Mammary epithelial cell (primary cell): ENCODE measurements at regions of chr6 and their contacts with region 1.

Region 1: GRCh38 chr6:136226027-136226673 is 24.0 kb downstream of the MTFR2 start:
- DNase-seq: no peak
- H3K4me3 ChIP-seq: no peak overlapping the region
- H3K27ac ChIP-seq: no peak overlapping the region
- H3K4me1 ChIP-seq: no peaks in the 10 kb centered on the region
- H3K27me3 ChIP-seq: no peaks in the 10 kb centered on the region
- CTCF ChIP-seq: peak; percentile 100

Region 2: GRCh38 chr6:135506270-135506997 is 719.7 kb before region 1 on chr6:
- CTCF ChIA-PET with region 1: no interaction called
- dilution Hi-C with region 1: no loop called
- in situ Hi-C with region 1: no loop called
- intact Hi-C with region 1: loop called (anchors 1 kb)
- DNase-seq: peak; percentile 8
- H3K4me3 ChIP-seq: no peak overlapping the region
- H3K27ac ChIP-seq: no peak overlapping the region
- H3K4me1 ChIP-seq: no peaks in the 10 kb centered on the region
- H3K27me3 ChIP-seq: no peaks in the 10 kb centered on the region
- CTCF ChIP-seq: peak; percentile 30 to 58

Region 3: DNA sequence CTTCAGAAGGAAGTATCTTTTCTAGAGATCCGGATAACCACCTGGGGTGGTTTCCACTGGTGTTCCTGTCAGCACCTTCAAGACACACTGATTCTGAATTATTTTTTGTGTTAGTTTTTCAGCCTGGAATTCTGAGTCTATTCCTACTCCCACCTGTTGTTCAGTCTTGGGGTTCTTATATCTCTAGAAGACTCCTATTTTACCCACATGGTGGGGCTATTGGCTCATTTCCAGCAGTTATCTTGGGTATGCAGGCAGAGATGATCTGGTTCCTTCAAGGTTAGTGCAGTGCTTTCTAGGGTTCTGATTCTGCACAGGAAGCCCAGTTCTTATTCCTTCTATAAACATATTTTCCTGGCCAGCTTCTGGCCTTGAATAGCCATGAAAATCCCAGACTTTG is 550.3 kb before region 1 on chr6:
- CTCF ChIA-PET with region 1: no interaction called
- dilution Hi-C with region 1: no loop called
- in situ Hi-C with region 1: no loop called
- intact Hi-C with region 1: loop called (anchors 1 kb)
- DNase-seq: peak; percentile 3
- H3K4me3 ChIP-seq: no peak overlapping the region
- H3K27ac ChIP-seq: no peak overlapping the region
- H3K4me1 ChIP-seq: no peaks in the 10 kb centered on the region
- H3K27me3 ChIP-seq: peaks cover 2% of the 10 kb centered on the region
- CTCF ChIP-seq: no peak

Region 4: DNA sequence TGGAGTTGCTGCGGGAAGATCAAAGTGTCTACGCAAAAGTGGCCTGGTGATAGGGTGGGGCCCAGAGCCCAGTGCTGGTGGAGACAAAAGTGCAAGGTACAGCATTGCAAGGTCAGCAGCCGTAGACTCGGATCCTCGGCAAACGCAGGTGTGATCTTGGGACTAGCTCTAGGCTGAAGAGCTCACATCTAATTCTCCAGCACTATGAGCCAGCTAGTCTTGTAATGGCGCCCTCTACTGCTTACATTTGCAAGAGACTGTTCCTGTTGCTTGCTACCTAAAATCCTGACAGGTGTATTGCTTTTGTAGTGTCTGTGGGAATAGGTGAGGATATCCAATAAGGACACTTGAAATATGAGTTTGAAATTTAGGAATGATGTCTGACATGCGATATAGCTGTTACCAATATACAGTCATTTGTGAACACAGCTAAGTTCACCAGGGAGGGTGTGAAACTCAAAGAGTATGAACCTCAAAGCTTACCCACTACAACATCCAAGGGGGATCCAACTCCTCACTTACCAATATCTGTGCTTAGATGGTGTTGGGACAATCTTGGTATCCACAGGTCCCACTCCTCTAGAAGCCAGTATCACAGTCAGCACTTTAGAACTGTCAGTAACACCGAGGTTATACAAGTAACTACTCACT is 316.3 kb before region 1 on chr6:
- CTCF ChIA-PET with region 1: no interaction called
- dilution Hi-C with region 1: no loop called
- in situ Hi-C with region 1: no loop called
- intact Hi-C with region 1: loop called (anchors 2 kb)
- DNase-seq: peak; percentile 54
- H3K4me3 ChIP-seq: no peak overlapping the region
- H3K27ac ChIP-seq: no peak overlapping the region
- H3K4me1 ChIP-seq: peaks cover 6% of the 10 kb centered on the region
- H3K27me3 ChIP-seq: no peaks in the 10 kb centered on the region
- CTCF ChIP-seq: peak; percentile 69 to 80

Region 5: DNA sequence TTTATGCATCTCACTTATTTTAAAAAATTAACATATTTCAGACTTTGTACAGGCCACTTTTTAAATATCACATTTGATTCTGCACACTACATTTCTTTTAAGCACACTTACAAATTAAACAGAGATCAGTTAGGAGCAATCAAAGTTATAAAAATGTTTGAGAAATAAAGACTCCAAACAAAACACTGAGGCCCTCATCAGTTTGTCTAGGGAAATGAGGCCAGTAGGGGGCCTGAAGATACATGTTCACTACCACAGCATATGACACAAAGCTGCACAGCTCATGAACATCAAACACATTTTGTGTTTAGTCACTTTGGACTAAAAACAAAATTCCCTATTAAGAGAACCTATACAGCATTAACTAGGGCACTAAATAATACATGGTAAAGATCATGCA is 194.2 kb before region 1 on chr6:
- CTCF ChIA-PET with region 1: no interaction called
- dilution Hi-C with region 1: no loop called
- in situ Hi-C with region 1: no loop called
- intact Hi-C with region 1: loop called (anchors 1 kb)
- DNase-seq: no peak
- H3K4me3 ChIP-seq: no peak overlapping the region
- H3K27ac ChIP-seq: no peak overlapping the region
- H3K4me1 ChIP-seq: no peaks in the 10 kb centered on the region
- H3K27me3 ChIP-seq: no peaks in the 10 kb centered on the region
- CTCF ChIP-seq: peak; percentile 43 to 52

Region 6: GRCh38 chr6:136173519-136174507 is 52.3 kb before region 1 on chr6:
- CTCF ChIA-PET with region 1: no interaction called
- dilution Hi-C with region 1: no loop called
- in situ Hi-C with region 1: no loop called
- intact Hi-C with region 1: no loop called
- DNase-seq: no peak
- H3K4me3 ChIP-seq: no peak overlapping the region
- H3K27ac ChIP-seq: no peak overlapping the region
- H3K4me1 ChIP-seq: no peaks in the 10 kb centered on the region
- H3K27me3 ChIP-seq: peaks cover 6% of the 10 kb centered on the region
- CTCF ChIP-seq: no peak

Region 7: DNA sequence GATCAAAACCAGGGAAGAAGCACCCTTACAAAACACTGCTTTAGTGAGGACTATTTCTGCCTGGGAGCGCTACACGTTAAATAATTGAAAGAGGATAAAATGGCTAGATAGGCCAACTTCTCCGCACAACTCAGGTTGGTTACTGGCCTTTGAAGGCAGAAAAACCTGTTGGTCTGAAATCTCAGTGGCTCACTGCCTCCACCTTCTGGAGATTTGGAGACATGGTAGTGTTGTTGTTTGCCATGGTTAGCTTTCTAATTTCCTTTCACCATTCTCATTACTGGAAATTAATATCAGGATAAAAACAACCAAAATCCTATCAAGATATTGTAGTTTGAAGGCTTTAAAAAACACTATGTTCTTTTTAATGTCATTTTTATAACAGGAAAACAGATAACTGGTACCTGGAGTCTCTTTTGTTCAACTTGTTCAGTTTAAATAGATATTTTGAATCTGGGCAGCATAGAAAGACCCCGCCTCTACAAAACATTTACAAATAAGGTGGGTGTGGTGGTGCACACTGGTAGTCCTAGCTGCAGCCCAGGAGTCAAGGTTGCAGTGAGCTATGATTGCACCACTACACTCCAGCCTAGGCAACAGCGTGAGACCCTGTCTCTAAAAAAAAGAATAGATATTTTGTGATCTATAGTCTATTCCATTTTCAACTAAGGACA is 91.0 kb after region 1 on chr6:
- CTCF ChIA-PET with region 1: no interaction called
- dilution Hi-C with region 1: no loop called
- in situ Hi-C with region 1: no loop called
- intact Hi-C with region 1: loop called (anchors 1 kb)
- DNase-seq: peak; percentile 57
- H3K4me3 ChIP-seq: no peak overlapping the region
- H3K27ac ChIP-seq: no peak overlapping the region
- H3K4me1 ChIP-seq: no peaks in the 10 kb centered on the region
- H3K27me3 ChIP-seq: peaks cover 3% of the 10 kb centered on the region
- CTCF ChIP-seq: peak; percentile 90 to 93